Activated B cell treated with CpG ODN at 0.5 μM for 24 hours (primary cell): ENCODE measurements at regions of chr22 and their contacts with region 1.

Region 1: DNA sequence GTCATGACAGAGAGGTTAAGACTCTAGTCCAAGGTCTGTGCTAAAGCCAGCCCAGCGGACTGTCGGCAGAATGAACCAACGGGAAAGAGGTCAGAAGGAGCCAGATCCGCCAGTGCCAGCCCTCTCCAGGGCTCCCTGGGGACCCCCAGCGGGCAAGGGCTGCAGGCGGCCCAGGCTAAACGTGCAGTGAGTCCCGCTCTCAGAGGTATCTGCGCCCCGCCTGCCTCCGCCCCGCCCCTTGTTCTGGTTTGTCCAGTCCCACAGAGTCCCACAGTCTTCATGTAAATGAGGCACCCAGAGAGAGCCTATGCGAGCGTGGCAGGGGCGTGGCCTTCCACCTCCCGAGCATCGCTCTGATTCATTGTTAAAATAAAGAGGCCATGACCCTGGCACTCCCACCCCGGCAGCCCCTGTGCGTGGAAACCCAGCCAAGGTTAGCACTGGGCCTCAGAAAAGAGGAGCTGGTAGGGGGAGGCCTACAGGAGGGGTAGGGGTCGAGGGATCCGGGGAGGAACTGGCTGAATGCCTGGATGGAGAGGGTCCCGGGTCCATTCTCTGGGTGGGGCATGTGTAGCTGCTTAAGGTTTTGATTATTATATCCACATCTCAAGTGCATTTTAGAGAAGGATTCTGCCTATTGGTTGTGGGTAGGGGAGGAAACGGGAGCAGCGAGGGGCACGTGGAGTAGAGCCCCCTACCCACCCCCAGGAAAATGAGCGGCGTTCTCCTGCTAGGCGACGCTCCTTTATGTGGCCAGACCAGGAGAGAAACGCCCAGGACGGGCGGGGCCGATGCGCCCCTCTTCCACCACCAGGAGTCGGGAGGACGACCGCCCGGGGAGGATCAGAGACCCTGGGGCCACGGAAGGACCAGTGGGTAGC is at the start of gene TRIOBP:
- DNase-seq: peak; percentile 76
- ATAC-seq: peak; percentile 99
- H3K4me3 Mint-ChIP-seq: peak within 1 kb of the TSS; percentile 60
- H3K27ac Mint-ChIP-seq: no peak within 1 kb of the TSS
- H3K4me1 Mint-ChIP-seq: peaks cover 15% of the 10 kb centered on the region
- H3K27me3 Mint-ChIP-seq: no peaks in the 10 kb centered on the region
- CTCF ChIP-seq: no peak
- total RNA-seq, gene TRIOBP: 25.5 and 27.4 TPM in 2 replicates

Region 2: GRCh38 chr22:37267135-37267587 is 429.7 kb before region 1 on chr22:
- CTCF ChIA-PET with region 1: no interaction called
- POLR2A ChIA-PET with region 1: no interaction called
- intact Hi-C with region 1: no loop called
- DNase-seq: peak; percentile 80
- ATAC-seq: peak; percentile 99
- H3K4me3 Mint-ChIP-seq: peak overlapping the region; percentile 88
- H3K27ac Mint-ChIP-seq: peak overlapping the region; percentile 93
- H3K4me1 Mint-ChIP-seq: peaks cover 31% of the 10 kb centered on the region
- H3K27me3 Mint-ChIP-seq: no peaks in the 10 kb centered on the region
- CTCF ChIP-seq: peak; percentile 29

Region 3: GRCh38 chr22:37330200-37331033 is 366.5 kb before region 1 on chr22:
- CTCF ChIA-PET with region 1: no interaction called
- POLR2A ChIA-PET with region 1: no interaction called
- intact Hi-C with region 1: no loop called
- DNase-seq: no peak
- ATAC-seq: peak; percentile 71
- H3K4me3 Mint-ChIP-seq: no peak overlapping the region
- H3K27ac Mint-ChIP-seq: peak overlapping the region; percentile 46
- H3K4me1 Mint-ChIP-seq: peaks cover 12% of the 10 kb centered on the region
- H3K27me3 Mint-ChIP-seq: peaks cover 60% of the 10 kb centered on the region
- CTCF ChIP-seq: no peak

Region 4: GRCh38 chr22:37920126-37920525 is 223.2 kb after region 1 on chr22:
- CTCF ChIA-PET with region 1: no interaction called
- POLR2A ChIA-PET with region 1: interaction called, 17 read pairs
- intact Hi-C with region 1: no loop called
- DNase-seq: no peak
- ATAC-seq: peak; percentile 14
- H3K4me3 Mint-ChIP-seq: peak overlapping the region; percentile 64
- H3K27ac Mint-ChIP-seq: peak overlapping the region; percentile 85
- H3K4me1 Mint-ChIP-seq: peaks cover 12% of the 10 kb centered on the region
- H3K27me3 Mint-ChIP-seq: no peaks in the 10 kb centered on the region
- CTCF ChIP-seq: no peak